ENCODE measurements at regions of chr14 and their contacts with region 1.

Region 1: GRCh38 chr14:68911594-68912227 is 67.4 kb downstream of the ACTN1 start:
- DNase-seq: peak; percentile 54 to 86 (median 80)
- ATAC-seq: peak; percentile 99
- H3K4me3 ChIP-seq: no peak overlapping the region
- H3K4me3 Mint-ChIP-seq: peak overlapping the region in 1 of 10 donors; percentile 37
- H3K27ac ChIP-seq: no peak overlapping the region
- H3K27ac Mint-ChIP-seq: peak overlapping the region; percentile 51 to 90 (median 82)
- H3K4me1 ChIP-seq: peaks cover 0 to 15% of the 10 kb centered on the region in 2 donors
- H3K4me1 Mint-ChIP-seq: peaks cover 13 to 57% (median 43%) of the 10 kb centered on the region in 7 donors
- H3K27me3 ChIP-seq: no peaks in the 10 kb centered on the region
- H3K27me3 Mint-ChIP-seq: no peaks in the 10 kb centered on the region

Region 2: GRCh38 chr14:68926236-68926635 is 14.5 kb after region 1 on chr14:
- CTCF ChIA-PET with region 1: interaction called, 12 read pairs
- POLR2A ChIA-PET with region 1: interaction called, 7 read pairs
- intact Hi-C with region 1: loop called in 1 of 2 experiments (anchors 2 kb)
- DNase-seq: peak in 3 of 9 donors; percentile 22 to 30 (median 29)
- ATAC-seq: no peak
- H3K4me3 ChIP-seq: no peak overlapping the region
- H3K4me3 Mint-ChIP-seq: peak overlapping the region in 4 of 10 donors; percentile 15 to 82 (median 30)
- H3K27ac ChIP-seq: no peak overlapping the region
- H3K27ac Mint-ChIP-seq: peak overlapping the region in 8 of 9 donors; percentile 86 to 97 (median 90)
- H3K4me1 ChIP-seq: peaks cover 0 to 72% of the 10 kb centered on the region in 2 donors
- H3K4me1 Mint-ChIP-seq: peaks cover 40 to 96% (median 87%) of the 10 kb centered on the region in 7 donors
- H3K27me3 ChIP-seq: no peaks in the 10 kb centered on the region
- H3K27me3 Mint-ChIP-seq: no peaks in the 10 kb centered on the region

Region 3: GRCh38 chr14:68970038-68970612 is 58.4 kb after region 1 on chr14:
- CTCF ChIA-PET with region 1: interaction called, 9 read pairs
- POLR2A ChIA-PET with region 1: interaction called, 3 read pairs
- intact Hi-C with region 1: loop called in 1 of 2 experiments (anchors 1 kb)
- DNase-seq: peak in 7 of 9 donors; percentile 81 to 94 (median 91)
- ATAC-seq: peak; percentile 77
- H3K4me3 ChIP-seq: peak overlapping the region; percentile 46
- H3K4me3 Mint-ChIP-seq: peak overlapping the region; percentile 43 to 96 (median 90)
- H3K27ac ChIP-seq: peak overlapping the region; percentile 89
- H3K27ac Mint-ChIP-seq: peak overlapping the region; percentile 85 to 100 (median 99)
- H3K4me1 ChIP-seq: peaks cover 27 to 79% of the 10 kb centered on the region in 2 donors
- H3K4me1 Mint-ChIP-seq: peaks cover 57 to 100% (median 90%) of the 10 kb centered on the region in 7 donors
- H3K27me3 ChIP-seq: no peaks in the 10 kb centered on the region
- H3K27me3 Mint-ChIP-seq: no peaks in the 10 kb centered on the region

Region 4: DNA sequence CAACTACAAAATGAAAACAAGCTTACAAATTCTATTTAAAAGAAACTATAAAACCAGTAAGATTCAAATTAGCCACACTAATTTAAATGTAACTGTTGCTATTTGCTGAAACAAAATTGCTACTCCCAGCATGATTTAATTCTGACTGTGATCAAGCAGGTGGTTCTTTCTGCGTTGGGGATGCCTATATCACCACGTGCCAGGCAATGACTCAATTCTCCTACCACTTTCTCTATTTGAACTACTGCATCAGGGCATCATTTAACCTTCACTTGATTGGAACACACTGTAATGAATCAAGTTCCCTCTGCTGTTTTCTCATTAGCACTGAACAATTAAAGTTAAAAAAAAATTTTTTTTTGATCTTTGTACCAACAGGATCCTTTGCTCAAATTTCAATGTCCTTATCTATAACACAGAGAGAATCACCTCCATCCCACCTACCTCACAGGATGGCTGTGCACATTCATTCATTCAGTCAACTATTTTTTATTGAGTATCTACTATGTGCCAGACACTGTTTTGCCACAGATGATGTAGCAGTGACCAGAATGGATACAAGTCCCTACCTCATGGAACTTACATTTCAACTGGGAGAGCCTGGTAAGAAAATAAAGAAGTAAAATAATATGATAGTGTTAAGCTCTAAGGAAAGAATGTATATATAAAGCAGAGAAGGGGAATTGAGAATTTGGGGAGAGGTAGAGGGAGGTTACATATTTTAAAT is 75.4 kb after region 1 on chr14:
- CTCF ChIA-PET with region 1: interaction called, 15 read pairs
- POLR2A ChIA-PET with region 1: interaction called, 3 read pairs
- intact Hi-C with region 1: no loop called
- DNase-seq: no peak
- ATAC-seq: peak; percentile 54
- H3K4me3 ChIP-seq: no peak overlapping the region
- H3K4me3 Mint-ChIP-seq: no peak overlapping the region
- H3K27ac ChIP-seq: no peak overlapping the region
- H3K27ac Mint-ChIP-seq: peak overlapping the region in 7 of 9 donors; percentile 8 to 67 (median 46)
- H3K4me1 ChIP-seq: no peaks in the 10 kb centered on the region
- H3K4me1 Mint-ChIP-seq: peaks cover 2 to 32% (median 23%) of the 10 kb centered on the region in 7 donors
- H3K27me3 ChIP-seq: no peaks in the 10 kb centered on the region
- H3K27me3 Mint-ChIP-seq: peaks cover 0 to 19% (median 0%) of the 10 kb centered on the region in 5 donors

Region 5: GRCh38 chr14:69010648-69011047 is 98.9 kb after region 1 on chr14:
- CTCF ChIA-PET with region 1: interaction called, 54 read pairs
- POLR2A ChIA-PET with region 1: no interaction called
- intact Hi-C with region 1: loop called in 1 of 2 experiments (anchors 2 kb)
- DNase-seq: no peak
- ATAC-seq: no peak
- H3K4me3 ChIP-seq: no peak overlapping the region
- H3K4me3 Mint-ChIP-seq: no peak overlapping the region
- H3K27ac ChIP-seq: no peak overlapping the region
- H3K27ac Mint-ChIP-seq: peak overlapping the region in 4 of 9 donors; percentile 28 to 69 (median 49)
- H3K4me1 ChIP-seq: peaks cover 0 to 3% of the 10 kb centered on the region in 2 donors
- H3K4me1 Mint-ChIP-seq: peaks cover 0 to 17% (median 9%) of the 10 kb centered on the region in 7 donors
- H3K27me3 ChIP-seq: no peaks in the 10 kb centered on the region
- H3K27me3 Mint-ChIP-seq: no peaks in the 10 kb centered on the region

Region 6: GRCh38 chr14:69055999-69056788 is 144.5 kb after region 1 on chr14:
- CTCF ChIA-PET with region 1: interaction called, 24 read pairs
- POLR2A ChIA-PET with region 1: no interaction called
- intact Hi-C with region 1: loop called in 1 of 2 experiments (anchors 1 kb)
- DNase-seq: peak in 7 of 9 donors; percentile 8 to 51 (median 27)
- ATAC-seq: peak; percentile 59
- H3K4me3 ChIP-seq: no peak overlapping the region
- H3K4me3 Mint-ChIP-seq: no peak overlapping the region
- H3K27ac ChIP-seq: no peak overlapping the region
- H3K27ac Mint-ChIP-seq: peak overlapping the region; percentile 3 to 73 (median 32)
- H3K4me1 ChIP-seq: no peaks in the 10 kb centered on the region
- H3K4me1 Mint-ChIP-seq: peaks cover 16 to 33% (median 25%) of the 10 kb centered on the region in 7 donors
- H3K27me3 ChIP-seq: no peaks in the 10 kb centered on the region
- H3K27me3 Mint-ChIP-seq: no peaks in the 10 kb centered on the region

Region 7: GRCh38 chr14:69107407-69108003 is 195.8 kb after region 1 on chr14:
- CTCF ChIA-PET with region 1: interaction called, 17 read pairs
- POLR2A ChIA-PET with region 1: no interaction called
- intact Hi-C with region 1: loop called (anchors 1 kb)
- DNase-seq: peak in 7 of 9 donors; percentile 31 to 59 (median 47)
- ATAC-seq: peak; percentile 67
- H3K4me3 ChIP-seq: no peak overlapping the region
- H3K4me3 Mint-ChIP-seq: no peak overlapping the region
- H3K27ac ChIP-seq: no peak overlapping the region
- H3K27ac Mint-ChIP-seq: peak overlapping the region in 1 of 9 donors; percentile 29
- H3K4me1 ChIP-seq: no peaks in the 10 kb centered on the region
- H3K4me1 Mint-ChIP-seq: peaks cover 2 to 18% (median 6%) of the 10 kb centered on the region in 7 donors
- H3K27me3 ChIP-seq: no peaks in the 10 kb centered on the region
- H3K27me3 Mint-ChIP-seq: no peaks in the 10 kb centered on the region

Measured in naive thymus-derived CD4-positive, alpha-beta T cell (primary cell).